BJ (cell line): ENCODE measurements at regions of chr1 and their contacts with region 1.

Region 1: DNA sequence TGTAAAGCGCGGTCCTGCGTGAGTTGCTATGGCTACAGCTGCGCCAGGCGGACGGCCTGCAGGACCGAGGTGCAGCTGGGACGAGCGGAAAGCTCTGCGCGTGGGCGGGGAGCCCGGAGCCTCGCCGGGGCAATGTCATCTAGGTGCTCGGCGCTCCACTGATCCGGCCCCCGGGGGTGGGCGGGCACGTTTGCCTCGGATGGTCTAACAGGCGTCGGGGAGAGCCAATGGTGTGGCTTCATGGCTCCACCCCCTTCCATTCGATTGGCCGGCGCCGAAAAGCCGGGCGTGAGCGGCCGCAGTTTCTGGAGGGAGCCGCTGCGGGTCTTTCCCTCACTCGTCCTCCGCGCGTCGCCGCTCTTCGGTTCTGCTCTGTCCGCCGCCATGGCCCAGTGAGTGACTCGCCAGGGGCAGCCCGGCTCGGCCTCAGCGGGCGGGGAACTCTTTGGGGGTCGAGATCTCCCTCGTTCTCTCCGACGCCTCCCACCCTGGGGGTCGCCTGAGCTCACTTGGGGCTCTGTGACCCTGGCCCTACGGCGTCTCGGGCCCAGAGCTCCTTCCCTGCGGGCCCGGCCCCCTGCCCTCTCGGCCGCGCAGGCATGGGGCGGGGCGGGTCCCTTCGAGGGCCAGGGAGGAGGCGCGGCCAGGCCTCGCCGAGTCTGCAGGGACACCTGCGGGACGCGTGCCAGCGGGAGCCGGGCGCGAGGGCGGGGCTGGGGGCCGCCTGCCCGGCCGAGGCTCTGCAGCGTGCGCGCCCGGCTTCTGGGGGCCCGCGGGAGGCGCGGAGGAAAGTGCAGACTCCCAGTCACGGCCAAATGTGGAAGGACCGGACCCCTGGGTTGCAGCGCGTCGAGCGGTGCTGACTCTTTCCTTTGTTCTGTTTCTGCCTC is at the start of gene PGD:
- DNase-seq: peak; percentile 83
- H3K4me3 ChIP-seq: peak within 1 kb of the TSS; percentile 78
- H3K27me3 ChIP-seq: no peaks in the 10 kb centered on the region
- CTCF ChIP-seq: peak; percentile 20; the same call in 1 of the 2 replicates
- polyA plus RNA-seq, gene PGD: 78.3 and 88.8 TPM in 2 replicates

Region 2: DNA sequence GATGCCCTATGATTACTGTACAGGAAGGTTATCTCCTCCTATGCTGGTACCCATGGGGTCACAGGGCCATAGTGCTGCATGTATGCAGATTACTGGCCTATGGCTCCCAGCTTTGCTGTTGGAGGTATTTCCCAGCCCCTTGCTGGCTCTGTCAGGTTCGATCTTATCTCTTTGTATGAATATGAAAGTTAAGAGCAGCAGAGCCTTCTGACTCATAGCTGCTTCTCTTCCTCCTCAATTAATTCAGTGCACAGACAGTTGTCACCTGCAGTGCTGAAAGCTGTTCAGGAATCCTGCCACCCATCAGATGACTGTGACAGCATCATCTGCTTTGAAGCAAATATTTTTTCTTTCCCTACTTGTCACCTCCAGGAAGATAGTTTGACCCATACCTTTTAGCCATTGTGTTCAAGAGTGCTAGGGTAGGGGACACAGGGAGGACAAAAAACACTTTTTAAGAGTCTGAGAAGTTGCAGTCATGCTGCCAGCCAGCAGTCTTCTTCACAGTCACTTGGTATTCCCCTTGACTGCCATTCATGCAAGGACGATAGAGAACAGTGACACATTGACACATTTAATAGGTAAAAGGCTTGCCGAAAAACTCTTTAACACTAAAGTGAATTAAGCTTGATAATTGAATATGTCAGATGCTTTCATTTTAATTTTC is 115.5 kb before region 1 on chr1:
- CTCF ChIA-PET with region 1: no interaction called
- POLR2A ChIA-PET with region 1: no interaction called
- DNase-seq: no peak
- H3K4me3 ChIP-seq: no peak overlapping the region
- H3K27me3 ChIP-seq: no peaks in the 10 kb centered on the region
- CTCF ChIP-seq: no peak

Region 3: GRCh38 chr1:10387413-10388079 is 11.4 kb before region 1 on chr1:
- CTCF ChIA-PET with region 1: interaction called, 10 read pairs
- POLR2A ChIA-PET with region 1: interaction called, 9 read pairs
- DNase-seq: no peak
- H3K4me3 ChIP-seq: no peak overlapping the region
- H3K27me3 ChIP-seq: no peaks in the 10 kb centered on the region
- CTCF ChIP-seq: peak; percentile 30; the same call in 1 of the 2 replicates

Region 4: GRCh38 chr1:10459181-10459580 is 60.2 kb after region 1 on chr1:
- CTCF ChIA-PET with region 1: no interaction called
- POLR2A ChIA-PET with region 1: interaction called, 13 read pairs
- DNase-seq: peak; percentile 46
- H3K4me3 ChIP-seq: no peak overlapping the region
- H3K27me3 ChIP-seq: no peaks in the 10 kb centered on the region
- CTCF ChIP-seq: no peak